Right ventricle myocardium inferior (tissue), 1 donor: ENCODE measurements at regions of chr6 and their contacts with region 1.

Region 1: GRCh38 chr6:144104898-144105487 is 9.6 kb upstream of the SF3B5 start:
- DNase-seq: no peak
- ATAC-seq: peak; percentile 86

Region 2: DNA sequence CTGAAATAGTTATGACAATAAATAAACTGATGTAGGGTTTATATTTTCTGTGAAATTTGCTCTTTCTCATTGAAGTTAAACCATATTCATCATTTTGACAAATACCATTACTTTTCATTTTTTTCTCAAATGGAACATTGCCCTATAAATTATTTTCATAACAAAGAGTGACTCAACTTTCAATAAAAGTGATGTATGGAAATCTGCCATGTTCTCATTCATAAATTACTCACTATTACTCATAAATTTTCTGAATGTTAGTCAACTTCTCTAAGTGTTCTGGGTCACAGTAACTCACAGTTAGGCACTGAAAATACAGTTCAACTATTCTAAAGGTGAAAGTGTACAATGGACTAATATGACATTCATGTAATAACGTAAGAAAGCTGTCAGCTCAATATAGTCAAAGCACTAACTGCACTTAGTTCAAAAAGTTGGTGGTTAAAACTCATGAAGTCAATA is 26.3 kb after region 1 on chr6:
- intact Hi-C with region 1: no loop called
- DNase-seq: no peak
- ATAC-seq: no peak

Region 3: GRCh38 chr6:144149891-144150709 is 45.1 kb after region 1 on chr6 and contains the start of gene STX11:
- intact Hi-C with region 1: loop called (anchors 5 kb)
- DNase-seq: peak; percentile 90
- ATAC-seq: peak; percentile 97
- total RNA-seq, gene STX11: 11.1 TPM

Region 4: GRCh38 chr6:144215932-144216667 is 111.1 kb after region 1 on chr6:
- intact Hi-C with region 1: loop called (anchors 1 kb)
- DNase-seq: peak; percentile 96
- ATAC-seq: peak; percentile 94

Region 5: DNA sequence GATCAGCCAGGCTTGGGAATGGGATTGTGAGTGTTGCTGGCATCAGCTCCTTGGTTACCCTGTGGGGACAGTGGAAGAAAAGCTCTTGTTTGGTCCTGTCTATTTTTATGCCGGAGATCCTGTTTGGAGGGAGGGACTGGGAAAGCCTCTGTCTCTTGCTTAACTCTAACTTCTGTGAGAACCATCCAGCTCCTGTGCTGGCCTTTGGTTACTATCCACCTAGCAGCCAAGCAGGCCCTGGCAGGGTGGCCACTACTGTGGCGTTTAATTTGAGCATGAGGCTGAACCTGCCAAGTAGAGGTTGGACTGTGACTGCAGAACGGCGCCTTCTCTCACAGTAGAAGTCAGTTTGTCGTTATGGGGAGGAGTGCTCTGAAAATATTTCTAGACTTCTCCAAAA is 373.5 kb after region 1 on chr6:
- intact Hi-C with region 1: loop called (anchors 2 kb)
- DNase-seq: peak; percentile 75
- ATAC-seq: peak; percentile 97